ENCODE measurements at regions of chr15 and their contacts with region 1.

Region 1: DNA sequence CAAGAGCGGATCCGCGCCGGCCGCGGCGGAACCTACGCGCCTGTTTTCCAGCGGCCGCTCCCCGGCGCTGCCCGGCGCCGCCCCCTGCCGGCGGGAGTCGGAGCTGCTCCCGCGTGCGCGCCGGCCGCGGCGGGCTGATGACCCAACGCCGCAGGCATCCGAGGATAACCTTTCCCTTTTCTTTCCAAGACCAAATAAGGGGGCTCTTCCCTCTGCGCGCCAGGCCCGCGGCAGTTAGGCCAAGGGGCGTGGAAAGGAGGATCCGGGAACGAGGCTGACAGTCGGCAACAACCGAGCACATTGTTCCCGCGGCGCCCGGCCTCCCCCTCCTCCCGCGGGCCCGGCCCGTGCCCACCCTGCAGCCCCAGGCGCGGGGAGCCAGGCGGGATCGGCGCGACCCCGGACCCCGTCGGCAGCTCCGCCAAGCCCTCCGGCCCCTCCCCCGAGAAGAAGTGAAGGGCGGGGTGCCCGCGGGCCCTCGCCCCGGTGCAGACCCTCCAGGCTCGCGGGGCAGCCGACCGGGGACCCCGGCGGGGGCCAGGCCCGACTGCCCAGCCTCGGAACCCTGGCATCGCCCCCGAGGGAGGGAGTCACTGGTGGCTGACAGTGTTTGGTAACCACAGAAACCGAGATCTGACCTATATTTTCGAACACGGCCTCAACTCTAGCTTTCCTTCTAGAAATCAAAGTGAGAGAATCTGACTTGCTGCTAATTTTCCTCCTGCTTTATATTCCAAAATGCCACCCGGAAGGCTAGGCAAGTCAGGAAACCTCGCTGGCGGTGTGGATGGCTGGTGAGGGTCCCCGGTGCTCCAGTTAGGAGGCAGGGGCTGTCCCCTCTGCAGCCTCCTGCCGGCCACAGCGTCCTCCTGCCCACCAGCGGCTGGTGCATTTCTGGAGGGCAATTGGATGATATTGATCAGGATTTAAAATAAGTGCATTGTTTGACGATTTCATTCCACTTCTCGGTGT is 45.6 kb upstream of the SYNM start:
- DNase-seq: peak; percentile 92

Region 2: DNA sequence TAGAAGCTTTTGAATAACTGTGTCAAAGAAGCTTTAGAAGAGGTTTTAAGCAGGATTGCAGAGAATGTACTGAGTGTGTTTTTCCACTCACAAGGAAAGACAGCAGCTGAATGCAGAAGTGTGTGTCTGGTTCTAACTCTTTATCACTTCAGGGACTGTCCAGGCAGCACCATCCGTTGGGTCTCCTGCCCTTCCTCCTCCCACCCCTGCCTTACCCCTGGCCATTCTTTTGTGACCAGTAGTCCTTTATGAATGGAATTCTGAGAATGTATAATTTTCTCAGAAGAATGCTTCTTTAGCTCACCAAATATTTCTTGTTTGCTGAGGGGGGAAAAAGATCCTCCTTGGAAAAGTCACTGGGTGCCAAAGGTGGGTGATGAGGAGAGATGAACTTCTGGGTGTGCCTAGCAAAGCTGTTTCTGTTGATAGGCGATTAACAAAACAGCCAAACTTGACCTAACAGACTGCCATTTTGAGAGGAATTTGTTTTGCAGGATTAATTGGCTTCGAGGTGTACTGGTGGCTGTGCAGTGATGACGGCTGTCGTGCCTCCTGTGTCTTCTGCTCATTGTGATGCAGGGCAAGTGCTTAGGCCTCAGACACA is 340.1 kb before region 1 on chr15:
- intact Hi-C with region 1: loop called (anchors 5 kb)
- DNase-seq: no peak

Region 3: DNA sequence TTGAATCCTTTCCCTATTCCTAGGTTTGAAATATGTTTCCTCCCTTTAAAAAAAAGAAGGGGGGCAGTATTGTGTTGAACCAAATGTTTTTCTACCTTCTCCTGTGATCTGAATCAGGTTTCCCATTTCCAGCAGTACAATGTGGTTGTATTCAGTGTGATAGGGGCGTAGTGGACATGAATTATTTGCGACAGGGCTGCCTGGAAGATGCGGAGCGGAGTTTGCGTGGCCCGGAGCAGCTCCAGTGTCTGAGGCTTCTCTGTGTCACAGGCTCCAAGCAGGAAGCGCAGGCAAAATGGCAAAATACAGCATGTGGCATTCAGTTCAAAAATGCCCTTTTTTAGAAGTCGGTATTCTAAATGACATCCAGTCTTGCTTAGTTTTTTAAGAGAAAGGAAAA is 206.1 kb before region 1 on chr15:
- intact Hi-C with region 1: loop called (anchors 1 kb)
- DNase-seq: peak; percentile 94

Region 4: DNA sequence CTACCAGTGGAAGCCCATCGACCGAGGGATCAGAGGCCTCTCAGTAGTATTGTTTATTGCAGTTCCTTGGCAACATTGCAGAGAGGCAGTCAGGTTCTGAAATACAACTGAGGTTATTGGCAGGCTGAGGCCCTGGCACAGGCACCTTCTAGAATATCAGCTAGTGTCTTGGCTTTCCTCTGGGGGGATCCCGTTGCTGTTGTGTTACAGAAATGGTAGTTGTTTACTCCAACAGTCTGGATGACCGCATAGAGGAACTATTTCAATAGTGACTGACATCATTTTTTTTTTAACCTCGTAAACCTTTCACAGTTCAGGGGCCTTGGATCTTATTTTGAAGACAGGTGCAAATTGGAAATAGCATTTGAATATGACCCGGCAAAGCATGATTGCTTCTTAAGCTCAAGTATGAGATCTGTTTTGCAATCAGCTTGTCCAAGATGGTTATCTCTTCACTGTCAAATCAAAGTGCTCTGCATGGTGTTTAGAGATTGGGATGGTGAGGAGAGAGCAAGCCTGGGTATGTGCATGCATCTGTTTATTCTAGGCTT is 115.6 kb before region 1 on chr15:
- intact Hi-C with region 1: loop called (anchors 2 kb)
- DNase-seq: no peak

Region 5: GRCh38 chr15:99014803-99015676 is 44.3 kb before region 1 on chr15:
- intact Hi-C with region 1: loop called (anchors 2 kb)
- DNase-seq: peak; percentile 81

Measured in cardiac septum (tissue), 1 donor.